ENCODE measurements at regions of chr16 and their contacts with region 1.

Region 1: DNA sequence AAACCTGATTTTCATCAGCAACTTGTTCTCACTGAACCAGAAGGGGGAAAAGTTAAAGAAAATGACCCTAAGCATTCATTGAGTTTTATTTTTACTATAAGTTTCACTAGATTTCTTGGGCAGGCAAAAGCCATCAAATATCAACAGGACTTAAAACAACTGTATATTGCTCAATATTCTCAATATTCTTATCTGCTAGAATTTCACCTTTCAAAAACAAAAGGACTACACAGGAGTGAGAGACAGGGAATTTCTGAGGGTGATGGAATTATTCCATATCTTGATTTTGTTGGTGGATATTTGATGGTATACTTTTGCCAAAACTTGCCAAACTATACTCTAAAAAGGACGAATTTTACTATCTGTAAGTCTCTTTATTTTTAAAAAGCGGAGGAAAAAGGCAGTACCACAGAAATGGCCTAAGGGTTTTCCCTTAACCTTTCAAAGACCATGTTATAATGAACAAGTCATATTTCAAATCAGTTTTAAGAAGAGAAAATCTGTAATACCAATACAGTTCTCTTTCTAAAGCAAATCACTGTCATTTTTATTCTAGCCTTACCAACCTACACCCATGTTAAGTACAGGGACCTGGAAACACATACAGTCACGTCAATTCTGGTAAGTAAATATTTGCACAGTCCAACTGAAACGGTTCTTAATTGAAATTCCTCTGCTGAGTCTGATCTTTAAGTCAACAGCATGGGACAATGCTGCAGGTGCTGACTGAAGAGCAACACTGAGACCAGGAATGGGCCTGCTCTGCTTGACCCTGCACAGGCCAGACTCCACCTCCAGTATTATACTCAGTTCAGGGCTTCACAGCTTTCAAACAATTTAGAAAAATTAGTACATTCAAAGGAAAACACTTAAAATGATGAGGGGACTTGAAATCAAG is 20.4 kb downstream of the MBTPS1 start:
- DNase-seq: no peak
- H3K4me3 ChIP-seq: no peak overlapping the region
- H3K27ac ChIP-seq: no peak overlapping the region
- H3K4me1 ChIP-seq: peaks cover 0 to under 1% (median 0%) of the 10 kb centered on the region in 4 experiments
- H3K27me3 ChIP-seq: peaks cover 0 to 26% (median 3%) of the 10 kb centered on the region in 5 experiments

Region 2: DNA sequence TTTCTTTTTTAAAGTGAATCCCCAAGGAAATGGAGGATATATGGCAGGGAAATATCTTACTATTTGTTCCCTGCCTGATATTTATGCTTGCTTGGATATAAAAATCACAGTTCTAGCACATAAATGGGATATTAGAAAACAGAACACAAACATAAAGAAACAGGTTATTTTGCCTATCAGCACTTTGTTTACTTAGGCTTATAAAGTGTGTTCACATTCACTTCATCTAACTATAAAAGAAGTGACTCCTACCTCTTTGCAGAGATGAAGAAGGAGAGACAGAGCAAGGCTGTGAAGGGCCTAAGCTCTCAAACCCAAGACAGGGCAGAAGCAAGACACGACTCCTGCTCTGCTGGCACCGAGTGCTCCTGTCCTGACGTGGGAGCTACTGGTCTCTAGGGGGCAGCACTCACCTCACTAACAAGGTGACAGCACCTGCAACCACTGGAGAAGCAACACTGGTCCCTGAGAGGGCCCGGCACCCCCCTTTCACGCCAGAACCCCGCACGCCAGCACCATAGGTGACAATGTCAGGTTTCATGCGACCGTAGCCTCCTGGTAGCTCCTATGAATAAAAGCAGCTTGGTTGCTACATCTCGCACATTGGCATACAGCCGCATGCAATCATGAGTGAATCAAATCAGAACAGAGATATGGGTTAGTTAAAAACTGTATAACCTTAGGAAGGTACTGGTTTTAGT is 11.6 kb before region 1 on chr16:
- CTCF ChIA-PET with region 1: interaction called, 10 read pairs
- POLR2A ChIA-PET with region 1: no interaction called
- DNase-seq: peak; percentile 66 to 72 (median 69)
- H3K4me3 ChIP-seq: no peak overlapping the region
- H3K27ac ChIP-seq: no peak overlapping the region
- H3K4me1 ChIP-seq: peaks cover 20 to 49% (median 43%) of the 10 kb centered on the region in 4 experiments
- H3K27me3 ChIP-seq: peaks cover 0 to 19% (median 4%) of the 10 kb centered on the region in 5 experiments

Region 3: GRCh38 chr16:84116720-84117493 is 20.5 kb after region 1 on chr16 and contains the start of gene MBTPS1:
- CTCF ChIA-PET with region 1: interaction called, 19 read pairs
- POLR2A ChIA-PET with region 1: interaction called, 3 read pairs
- DNase-seq: peak; percentile 97 to 98 (median 98)
- H3K4me3 ChIP-seq: peak within 1 kb of the TSS; percentile 71 to 94 (median 89)
- H3K27ac ChIP-seq: peak within 1 kb of the TSS; percentile 83 to 93
- H3K4me1 ChIP-seq: peaks cover 8 to 31% (median 21%) of the 10 kb centered on the region in 4 experiments
- H3K27me3 ChIP-seq: peaks cover 0 to 5% (median 3%) of the 10 kb centered on the region in 5 experiments

Measured in common myeloid progenitor, CD34-positive (primary cell).